Activated CD4-positive, alpha-beta memory T cell treated with anti-CD3 and anti-CD28 coated beads for 36 hours (primary cell): ENCODE measurements at regions of chr10 and their contacts with region 1.

Region 1: GRCh38 chr10:8338177-8338766 is 283.8 kb downstream of the GATA3 start:
- DNase-seq: peak; percentile 29
- H3K4me3 Mint-ChIP-seq: peak overlapping the region; percentile 64
- H3K27ac Mint-ChIP-seq: peak overlapping the region; percentile 94
- H3K4me1 Mint-ChIP-seq: peaks cover 45% of the 10 kb centered on the region
- H3K27me3 Mint-ChIP-seq: peaks cover 3% of the 10 kb centered on the region

Region 2: GRCh38 chr10:8137726-8138125 is 200.5 kb before region 1 on chr10:
- CTCF ChIA-PET with region 1: no interaction called
- POLR2A ChIA-PET with region 1: interaction called, 11 read pairs
- intact Hi-C with region 1: loop called (anchors 1 kb)
- DNase-seq: peak; percentile 43
- H3K4me3 Mint-ChIP-seq: peak overlapping the region; percentile 59
- H3K27ac Mint-ChIP-seq: peak overlapping the region; percentile 86
- H3K4me1 Mint-ChIP-seq: peaks cover 57% of the 10 kb centered on the region
- H3K27me3 Mint-ChIP-seq: peaks cover 4% of the 10 kb centered on the region

Region 3: GRCh38 chr10:8283986-8284385 is 54.3 kb before region 1 on chr10:
- CTCF ChIA-PET with region 1: no interaction called
- POLR2A ChIA-PET with region 1: no interaction called
- intact Hi-C with region 1: no loop called
- DNase-seq: no peak
- H3K4me3 Mint-ChIP-seq: no peak overlapping the region
- H3K27ac Mint-ChIP-seq: no peak overlapping the region
- H3K4me1 Mint-ChIP-seq: peaks cover 6% of the 10 kb centered on the region
- H3K27me3 Mint-ChIP-seq: no peaks in the 10 kb centered on the region

Region 4: GRCh38 chr10:8315619-8316021 is 22.7 kb before region 1 on chr10:
- CTCF ChIA-PET with region 1: no interaction called
- POLR2A ChIA-PET with region 1: no interaction called
- intact Hi-C with region 1: loop called (anchors 1 kb)
- DNase-seq: peak; percentile 51
- H3K4me3 Mint-ChIP-seq: no peak overlapping the region
- H3K27ac Mint-ChIP-seq: peak overlapping the region; percentile 85
- H3K4me1 Mint-ChIP-seq: peaks cover 41% of the 10 kb centered on the region
- H3K27me3 Mint-ChIP-seq: peaks cover 4% of the 10 kb centered on the region

Region 5: GRCh38 chr10:8325024-8325980 is 13.0 kb before region 1 on chr10:
- CTCF ChIA-PET with region 1: no interaction called
- POLR2A ChIA-PET with region 1: interaction called, 6 read pairs
- intact Hi-C with region 1: loop called (anchors 1 kb)
- DNase-seq: peak; percentile 53
- H3K4me3 Mint-ChIP-seq: peak overlapping the region; percentile 20
- H3K27ac Mint-ChIP-seq: peak overlapping the region; percentile 89
- H3K4me1 Mint-ChIP-seq: peaks cover 52% of the 10 kb centered on the region
- H3K27me3 Mint-ChIP-seq: peaks cover 3% of the 10 kb centered on the region

Region 6: DNA sequence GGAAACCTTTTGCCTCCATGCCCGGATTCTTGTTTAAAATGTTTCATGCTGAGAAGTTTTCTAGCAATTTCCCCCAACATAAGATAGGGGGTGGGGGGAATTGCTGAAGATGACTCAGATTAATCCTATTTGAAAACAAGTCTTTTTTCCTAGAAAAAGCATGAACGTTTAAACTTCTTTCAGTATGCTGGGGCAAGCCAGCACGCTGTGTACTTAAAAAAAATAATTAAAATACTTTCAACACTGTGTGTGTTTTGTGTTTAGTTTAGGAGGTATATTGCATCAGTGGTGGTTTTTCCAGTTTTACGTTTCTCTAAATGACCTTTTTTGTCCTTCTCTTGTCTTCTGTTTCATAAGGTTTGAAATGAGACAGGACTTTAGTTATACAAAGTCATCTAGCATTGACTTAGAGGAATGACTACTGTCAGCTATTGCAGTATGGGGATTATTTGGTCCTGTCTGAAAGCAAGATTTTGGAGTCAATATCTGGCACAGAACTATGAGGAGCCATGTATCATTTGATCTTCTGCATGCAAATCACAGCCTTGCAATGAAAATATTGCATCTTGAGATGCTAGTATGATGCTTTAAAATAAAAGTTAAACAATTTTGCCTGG is 12.2 kb after region 1 on chr10:
- CTCF ChIA-PET with region 1: interaction called, 3 read pairs
- POLR2A ChIA-PET with region 1: no interaction called
- intact Hi-C with region 1: loop called (anchors 1 kb)
- DNase-seq: no peak
- H3K4me3 Mint-ChIP-seq: peak overlapping the region; percentile 16
- H3K27ac Mint-ChIP-seq: peak overlapping the region; percentile 78
- H3K4me1 Mint-ChIP-seq: peaks cover 3% of the 10 kb centered on the region
- H3K27me3 Mint-ChIP-seq: peaks cover 2% of the 10 kb centered on the region

Region 7: GRCh38 chr10:8360365-8360764 is 22.1 kb after region 1 on chr10:
- CTCF ChIA-PET with region 1: interaction called, 3 read pairs
- POLR2A ChIA-PET with region 1: interaction called, 7 read pairs
- intact Hi-C with region 1: loop called (anchors 1 kb)
- DNase-seq: no peak
- H3K4me3 Mint-ChIP-seq: no peak overlapping the region
- H3K27ac Mint-ChIP-seq: no peak overlapping the region
- H3K4me1 Mint-ChIP-seq: peaks cover 48% of the 10 kb centered on the region
- H3K27me3 Mint-ChIP-seq: no peaks in the 10 kb centered on the region

Region 8: DNA sequence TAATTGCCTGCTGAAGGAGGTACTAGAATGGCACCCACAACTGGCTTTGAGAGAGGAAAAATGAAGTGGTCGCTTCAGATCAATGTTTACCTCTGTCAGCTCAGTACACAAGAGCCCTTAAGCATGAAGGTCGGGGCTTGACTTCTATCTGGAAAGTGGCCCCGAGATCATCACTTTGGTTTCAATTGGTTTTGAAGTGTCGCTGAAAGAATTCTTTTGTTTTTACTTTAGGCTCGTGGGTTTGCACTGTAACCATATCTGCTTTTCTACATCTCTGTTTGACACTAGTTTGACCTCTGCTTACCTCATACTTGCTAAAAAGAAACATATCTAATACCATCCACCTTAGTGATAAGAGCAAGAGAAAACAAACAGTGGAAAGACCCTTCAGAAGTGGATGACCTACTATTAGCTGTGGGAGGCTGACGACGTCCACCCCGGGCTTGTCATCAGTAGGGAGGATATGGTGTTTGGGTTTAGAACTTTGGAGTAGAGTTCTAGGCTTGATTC is 78.0 kb after region 1 on chr10:
- CTCF ChIA-PET with region 1: no interaction called
- POLR2A ChIA-PET with region 1: no interaction called
- intact Hi-C with region 1: loop called (anchors 2 kb)
- DNase-seq: peak; percentile 56
- H3K4me3 Mint-ChIP-seq: no peak overlapping the region
- H3K27ac Mint-ChIP-seq: peak overlapping the region; percentile 72
- H3K4me1 Mint-ChIP-seq: peaks cover 24% of the 10 kb centered on the region
- H3K27me3 Mint-ChIP-seq: no peaks in the 10 kb centered on the region